ENCODE measurements at regions of chr5 and their contacts with region 1.

Region 1: GRCh38 chr5:154214371-154215106 is 24.0 kb downstream of the GALNT10 start:
- DNase-seq: no peak
- H3K4me3 Mint-ChIP-seq: peak overlapping the region; percentile 9
- H3K27ac Mint-ChIP-seq: peak overlapping the region; percentile 83
- H3K4me1 Mint-ChIP-seq: peaks cover 43% of the 10 kb centered on the region
- H3K27me3 Mint-ChIP-seq: no peaks in the 10 kb centered on the region

Region 2: DNA sequence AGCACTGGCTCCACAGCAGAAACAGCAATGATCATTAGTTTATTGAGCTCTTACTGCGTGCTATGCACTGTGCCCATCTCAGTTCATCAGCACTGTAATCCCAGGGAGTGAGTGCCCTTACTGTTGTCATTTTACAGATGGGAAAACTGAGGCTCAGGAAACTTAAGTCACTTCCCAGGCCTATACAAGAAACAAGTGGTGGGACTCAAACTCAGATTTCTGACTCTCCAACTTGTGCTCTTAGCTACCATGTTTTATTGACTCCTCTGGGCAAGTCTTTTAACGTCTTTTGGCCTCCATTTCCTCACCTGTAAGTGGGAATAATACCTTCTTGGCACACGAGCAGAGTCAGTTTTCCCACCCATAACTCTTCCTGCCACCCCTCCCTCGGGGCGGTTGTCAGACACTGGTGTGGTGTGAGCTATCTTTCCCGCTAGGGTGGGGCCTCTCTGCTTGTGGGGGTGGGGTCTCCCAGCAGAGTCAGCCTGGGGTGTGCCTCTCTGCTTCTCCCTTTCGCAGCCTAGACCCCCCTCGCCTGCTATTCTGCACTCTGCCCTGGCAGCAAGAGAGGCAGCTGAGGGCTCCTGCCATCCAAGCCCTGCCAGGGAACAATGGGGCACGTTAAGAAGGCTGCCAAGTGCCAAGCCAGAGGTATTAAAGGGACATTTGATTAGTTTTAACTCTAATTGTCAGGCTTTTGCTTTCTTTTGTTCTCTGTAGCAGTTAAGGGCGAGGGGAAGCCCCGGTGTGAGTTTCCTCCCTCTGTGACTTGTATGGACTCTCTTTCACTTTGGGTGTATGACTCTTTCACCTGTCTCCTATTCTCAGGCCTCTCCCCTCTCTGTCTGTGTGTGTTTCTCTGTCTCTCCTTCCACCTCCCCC is 11.9 kb before region 1 on chr5:
- intact Hi-C with region 1: loop called (anchors 1 kb)
- DNase-seq: peak; percentile 40
- H3K4me3 Mint-ChIP-seq: peak overlapping the region; percentile 57
- H3K27ac Mint-ChIP-seq: peak overlapping the region; percentile 73
- H3K4me1 Mint-ChIP-seq: peaks cover 49% of the 10 kb centered on the region
- H3K27me3 Mint-ChIP-seq: no peaks in the 10 kb centered on the region

Region 3: GRCh38 chr5:154228696-154229095 is 14.2 kb after region 1 on chr5:
- intact Hi-C with region 1: loop called (anchors 1 kb)
- DNase-seq: no peak
- H3K4me3 Mint-ChIP-seq: peak overlapping the region; percentile 14
- H3K27ac Mint-ChIP-seq: peak overlapping the region; percentile 57
- H3K4me1 Mint-ChIP-seq: peaks cover 31% of the 10 kb centered on the region
- H3K27me3 Mint-ChIP-seq: no peaks in the 10 kb centered on the region

Region 4: GRCh38 chr5:154273028-154273617 is 58.6 kb after region 1 on chr5:
- intact Hi-C with region 1: loop called (anchors 5 kb)
- DNase-seq: peak; percentile 11
- H3K4me3 Mint-ChIP-seq: no peak overlapping the region
- H3K27ac Mint-ChIP-seq: peak overlapping the region; percentile 40
- H3K4me1 Mint-ChIP-seq: peaks cover 52% of the 10 kb centered on the region
- H3K27me3 Mint-ChIP-seq: no peaks in the 10 kb centered on the region

Region 5: GRCh38 chr5:154505611-154506010 is 291.1 kb after region 1 on chr5:
- intact Hi-C with region 1: no loop called
- DNase-seq: no peak
- H3K4me3 Mint-ChIP-seq: no peak overlapping the region
- H3K27ac Mint-ChIP-seq: no peak overlapping the region
- H3K4me1 Mint-ChIP-seq: peaks cover 3% of the 10 kb centered on the region
- H3K27me3 Mint-ChIP-seq: peaks cover 28% of the 10 kb centered on the region

Measured in activated T-helper 2 cell treated with anti-CD3 and anti-CD28 coated beads, Interferon-gamma antibody, Interleukin-2, Interleukin-4, amounts not matched to agents 10 μg/mL and 5 μg/mL and 100 μg/mL, durations not matched to agents 14 hours and 24 hours and 36 hours (primary cell).